Activated T-helper 2 cell treated with anti-CD3 and anti-CD28 coated beads, Interferon-gamma antibody, Interleukin-2, Interleukin-4, amounts not matched to agents 10 μg/mL and 5 μg/mL and 100 μg/mL, durations not matched to agents 14 hours and 24 hours and 36 hours (primary cell): ENCODE measurements at regions of chr16 and their contacts with region 1.

Region 1: GRCh38 chr16:19086322-19087199 is 19.1 kb downstream of the COQ7 start:
- DNase-seq: peak; percentile 72
- H3K4me3 Mint-ChIP-seq: peak overlapping the region; percentile 64
- H3K27ac Mint-ChIP-seq: no peak overlapping the region
- H3K4me1 Mint-ChIP-seq: peaks cover 6% of the 10 kb centered on the region
- H3K27me3 Mint-ChIP-seq: peaks cover 12% of the 10 kb centered on the region

Region 2: GRCh38 chr16:19108409-19109287 is 22.1 kb after region 1 on chr16:
- intact Hi-C with region 1: no loop called
- DNase-seq: no peak
- H3K4me3 Mint-ChIP-seq: no peak overlapping the region
- H3K27ac Mint-ChIP-seq: peak overlapping the region; percentile 22
- H3K4me1 Mint-ChIP-seq: peaks cover 26% of the 10 kb centered on the region
- H3K27me3 Mint-ChIP-seq: no peaks in the 10 kb centered on the region

Region 3: DNA sequence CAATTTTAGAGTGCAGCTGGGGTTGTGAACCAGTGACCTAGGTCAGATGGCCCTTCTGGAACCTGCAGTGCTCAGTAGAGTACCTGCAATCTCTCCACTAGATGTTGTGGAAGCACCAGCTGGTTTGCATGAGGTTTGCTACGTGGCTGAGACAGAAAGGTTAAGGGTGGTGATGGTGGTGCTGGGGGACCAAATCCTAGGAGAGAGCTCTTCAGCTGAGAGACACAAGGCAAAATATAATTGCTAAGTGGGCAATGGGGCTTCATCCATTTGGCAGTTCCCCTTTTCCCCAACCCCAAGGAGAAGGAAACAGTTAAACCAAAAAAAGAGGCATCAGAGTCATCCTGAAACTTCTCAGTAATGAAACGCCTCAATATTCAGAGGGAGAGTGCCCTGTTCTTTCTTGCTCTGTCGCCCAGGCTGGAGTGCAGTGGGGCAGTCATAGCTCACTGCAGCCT is 41.1 kb after region 1 on chr16:
- intact Hi-C with region 1: no loop called
- DNase-seq: no peak
- H3K4me3 Mint-ChIP-seq: peak overlapping the region; percentile 6
- H3K27ac Mint-ChIP-seq: peak overlapping the region; percentile 86
- H3K4me1 Mint-ChIP-seq: peaks cover 52% of the 10 kb centered on the region
- H3K27me3 Mint-ChIP-seq: no peaks in the 10 kb centered on the region

Region 4: GRCh38 chr16:19167710-19168370 is 81.3 kb after region 1 on chr16 and contains the start of gene SYT17:
- intact Hi-C with region 1: loop called (anchors 2 kb)
- DNase-seq: peak; percentile 40
- H3K4me3 Mint-ChIP-seq: peak within 1 kb of the TSS; percentile 33
- H3K27ac Mint-ChIP-seq: no peak within 1 kb of the TSS
- H3K4me1 Mint-ChIP-seq: no peaks in the 10 kb centered on the region
- H3K27me3 Mint-ChIP-seq: peaks cover 23% of the 10 kb centered on the region
- total RNA-seq, gene SYT17: 0.34 and 0.57 TPM in 2 replicates

Region 5: GRCh38 chr16:19179546-19180490 is 93.3 kb after region 1 on chr16:
- intact Hi-C with region 1: loop called (anchors 1 kb)
- DNase-seq: peak; percentile 32
- H3K4me3 Mint-ChIP-seq: no peak overlapping the region
- H3K27ac Mint-ChIP-seq: no peak overlapping the region
- H3K4me1 Mint-ChIP-seq: peaks cover 4% of the 10 kb centered on the region
- H3K27me3 Mint-ChIP-seq: peaks cover 6% of the 10 kb centered on the region

Region 6: GRCh38 chr16:19375561-19376158 is 289.1 kb after region 1 on chr16:
- intact Hi-C with region 1: loop called (anchors 1 kb)
- DNase-seq: no peak
- H3K4me3 Mint-ChIP-seq: no peak overlapping the region
- H3K27ac Mint-ChIP-seq: no peak overlapping the region
- H3K4me1 Mint-ChIP-seq: peaks cover 13% of the 10 kb centered on the region
- H3K27me3 Mint-ChIP-seq: peaks cover 2% of the 10 kb centered on the region

Region 7: GRCh38 chr16:19432429-19432828 is 345.9 kb after region 1 on chr16:
- intact Hi-C with region 1: no loop called
- DNase-seq: no peak
- H3K4me3 Mint-ChIP-seq: no peak overlapping the region
- H3K27ac Mint-ChIP-seq: no peak overlapping the region
- H3K4me1 Mint-ChIP-seq: peaks cover 10% of the 10 kb centered on the region
- H3K27me3 Mint-ChIP-seq: no peaks in the 10 kb centered on the region

Region 8: DNA sequence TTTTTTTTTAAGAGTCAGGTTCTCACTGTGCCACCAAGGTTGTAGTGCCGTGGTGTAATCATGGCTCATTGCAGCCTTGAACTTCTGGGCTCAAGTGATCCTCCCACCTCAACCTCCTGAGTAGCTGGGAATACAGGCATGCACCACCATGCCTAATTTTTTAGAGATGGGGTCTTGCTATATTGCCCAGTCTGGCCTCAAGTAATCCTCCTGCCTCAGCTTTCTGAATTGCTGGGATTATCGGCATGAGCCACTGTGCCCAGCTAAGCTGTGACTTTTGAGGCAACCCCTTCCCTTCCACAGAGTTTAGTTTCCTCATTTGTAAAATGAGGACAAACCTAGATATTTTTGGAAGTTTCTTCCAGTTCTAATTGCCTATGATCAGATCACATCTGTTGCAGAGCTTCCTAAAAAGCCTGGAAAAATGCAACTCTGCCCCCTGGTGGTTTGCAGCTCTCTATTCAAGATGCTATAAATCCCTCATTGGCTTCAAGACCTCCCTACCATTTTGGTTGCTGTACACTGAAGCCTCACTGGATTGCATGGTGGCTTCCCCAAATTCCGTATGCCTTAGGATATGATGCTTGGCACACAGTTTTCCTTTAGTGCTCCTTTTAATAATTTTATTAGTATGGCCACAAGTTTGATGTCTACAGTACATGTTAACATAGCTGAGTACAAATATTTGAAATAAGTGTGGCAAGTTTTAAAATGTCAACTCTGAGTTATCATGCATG is 416.0 kb after region 1 on chr16:
- intact Hi-C with region 1: loop called (anchors 5 kb)
- DNase-seq: peak; percentile 41
- H3K4me3 Mint-ChIP-seq: no peak overlapping the region
- H3K27ac Mint-ChIP-seq: no peak overlapping the region
- H3K4me1 Mint-ChIP-seq: no peaks in the 10 kb centered on the region
- H3K27me3 Mint-ChIP-seq: no peaks in the 10 kb centered on the region